OCI-LY7 (cell line): ENCODE measurements at regions of chr2 and their contacts with region 1.

Region 1: DNA sequence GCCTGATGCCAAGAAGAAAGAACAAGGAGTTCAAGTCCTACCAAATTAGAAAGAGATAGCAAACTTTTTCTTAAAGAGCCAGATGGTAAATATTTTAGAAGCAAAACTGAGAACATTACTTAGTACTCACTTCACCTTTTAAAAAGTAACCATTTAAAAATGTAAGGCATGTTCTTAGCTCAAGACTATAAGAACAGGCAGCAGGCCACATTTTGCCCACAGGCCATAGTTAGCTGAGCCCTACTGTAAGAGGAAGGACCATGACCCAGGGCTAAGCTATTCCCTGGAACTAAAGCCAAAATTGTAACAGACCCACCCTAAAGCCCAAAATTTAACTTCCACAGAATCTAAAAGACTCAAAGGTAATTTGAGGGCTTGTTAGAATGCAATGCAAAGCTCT is 31.3 kb downstream of the USP40 start:
- DNase-seq: no peak
- H3K4me3 ChIP-seq: no peak overlapping the region
- H3K27ac ChIP-seq: no peak overlapping the region
- H3K4me1 ChIP-seq: peaks cover 33% of the 10 kb centered on the region
- CTCF ChIP-seq: no peak

Region 2: GRCh38 chr2:233513953-233514655 is 21.2 kb before region 1 on chr2:
- CTCF ChIA-PET with region 1: no interaction called
- POLR2A ChIA-PET with region 1: interaction called, 12 read pairs
- intact Hi-C with region 1: no loop called
- DNase-seq: peak; percentile 89
- H3K4me3 ChIP-seq: peak overlapping the region; percentile 36
- H3K27ac ChIP-seq: peak overlapping the region; percentile 76
- H3K4me1 ChIP-seq: peaks cover 66% of the 10 kb centered on the region
- CTCF ChIP-seq: no peak

Region 3: GRCh38 chr2:233519787-233520611 is 15.3 kb before region 1 on chr2:
- CTCF ChIA-PET with region 1: interaction called, 3 read pairs
- POLR2A ChIA-PET with region 1: interaction called, 21 read pairs
- intact Hi-C with region 1: no loop called
- DNase-seq: peak; percentile 84
- H3K4me3 ChIP-seq: peak overlapping the region; percentile 51
- H3K27ac ChIP-seq: peak overlapping the region; percentile 98
- H3K4me1 ChIP-seq: peaks cover 64% of the 10 kb centered on the region
- CTCF ChIP-seq: no peak; the same call in 1 of the 2 replicates

Region 4: DNA sequence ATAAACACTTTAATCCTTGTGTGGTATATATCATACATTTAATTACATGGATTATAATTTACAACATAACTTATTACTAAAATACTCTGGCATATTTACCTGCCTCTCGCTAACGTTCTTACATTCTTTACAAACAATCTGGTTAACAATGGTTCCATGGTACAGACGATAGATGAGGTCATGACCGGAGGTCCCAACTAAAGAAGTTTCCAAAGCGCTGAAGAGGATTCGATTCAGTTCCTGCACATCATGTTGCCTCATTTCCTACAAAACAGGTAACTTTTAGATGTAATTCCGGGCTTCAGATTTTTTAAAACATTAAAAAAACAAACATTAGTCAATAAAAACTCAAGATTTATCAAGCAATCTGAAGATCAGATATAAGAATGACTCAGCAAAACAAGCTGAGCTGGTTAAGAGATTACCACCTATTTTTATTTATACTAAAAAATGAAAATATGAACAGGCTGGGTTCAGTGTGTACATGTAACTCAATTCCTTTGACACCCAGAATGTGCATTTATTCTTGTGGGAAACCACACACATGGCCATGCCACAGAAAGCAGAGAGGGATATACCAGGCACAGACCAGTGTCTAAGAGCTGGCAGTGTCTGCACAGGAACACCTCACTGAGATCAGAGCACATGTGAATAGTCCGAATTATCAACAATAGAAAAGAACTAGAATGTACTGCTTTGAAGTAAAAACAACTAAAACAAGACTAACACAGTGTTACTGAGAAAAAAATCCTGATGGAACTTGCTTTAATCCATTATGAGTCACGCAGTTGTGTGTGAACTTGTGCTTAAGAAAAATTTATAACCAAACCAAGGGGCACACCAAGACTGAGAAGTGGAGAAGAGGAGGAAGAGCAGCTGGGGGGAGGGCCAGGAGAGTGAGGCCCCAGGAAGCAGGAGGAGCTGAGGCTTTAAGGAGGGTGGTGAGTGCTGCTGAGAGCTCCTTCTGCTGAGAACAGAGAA is 21.8 kb after region 1 on chr2:
- CTCF ChIA-PET with region 1: no interaction called
- POLR2A ChIA-PET with region 1: interaction called, 20 read pairs
- intact Hi-C with region 1: no loop called
- DNase-seq: peak; percentile 63
- H3K4me3 ChIP-seq: peak overlapping the region; percentile 9
- H3K27ac ChIP-seq: peak overlapping the region; percentile 46
- H3K4me1 ChIP-seq: peaks cover 22% of the 10 kb centered on the region
- CTCF ChIP-seq: no peak; the same call in 1 of the 2 replicates